CD4-positive, alpha-beta T cell (primary cell): ENCODE measurements at regions of chr3 and their contacts with region 1.

Region 1: DNA sequence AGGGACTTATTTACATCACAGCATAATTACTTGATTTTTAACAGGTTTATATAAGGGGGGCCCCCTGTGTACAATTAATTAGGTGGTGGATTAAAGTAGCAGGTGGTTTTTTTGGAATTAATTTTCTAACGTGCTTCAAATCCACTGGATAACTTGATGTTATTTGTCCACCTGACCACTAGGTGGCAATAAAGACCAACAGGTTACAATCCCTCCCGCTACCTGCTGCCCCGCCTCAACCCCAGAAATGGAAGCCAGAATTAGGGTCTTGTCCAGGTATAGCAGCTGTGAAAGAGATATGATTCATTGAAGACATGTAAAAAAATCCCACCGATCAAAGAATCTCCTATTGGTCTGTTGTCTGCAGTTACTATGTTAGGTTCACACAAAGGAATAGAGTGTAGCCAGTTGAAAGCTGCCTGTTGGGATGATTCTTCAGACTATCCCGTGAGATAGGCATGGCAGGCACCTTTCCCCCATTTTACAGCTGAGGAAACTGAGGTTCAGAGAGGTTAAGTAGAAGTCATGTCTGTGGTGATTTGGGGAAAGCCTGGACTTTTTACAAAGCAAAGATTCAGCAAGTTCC is 44.0 kb downstream of the MFSD1 start:
- DNase-seq: peak in 8 of 14 experiments; percentile 5 to 64 (median 28)
- ATAC-seq: no peak
- H3K4me3 ChIP-seq: no peak overlapping the region
- H3K4me3 Mint-ChIP-seq: no peak overlapping the region
- H3K27ac ChIP-seq: no peak overlapping the region
- H3K27ac Mint-ChIP-seq: no peak overlapping the region
- H3K4me1 ChIP-seq: peaks cover 3% of the 10 kb centered on the region
- H3K4me1 Mint-ChIP-seq: peaks cover 3% of the 10 kb centered on the region
- H3K27me3 ChIP-seq: no peaks in the 10 kb centered on the region
- H3K27me3 Mint-ChIP-seq: peaks cover 6% of the 10 kb centered on the region
- CTCF ChIP-seq: peak; percentile 93

Region 2: DNA sequence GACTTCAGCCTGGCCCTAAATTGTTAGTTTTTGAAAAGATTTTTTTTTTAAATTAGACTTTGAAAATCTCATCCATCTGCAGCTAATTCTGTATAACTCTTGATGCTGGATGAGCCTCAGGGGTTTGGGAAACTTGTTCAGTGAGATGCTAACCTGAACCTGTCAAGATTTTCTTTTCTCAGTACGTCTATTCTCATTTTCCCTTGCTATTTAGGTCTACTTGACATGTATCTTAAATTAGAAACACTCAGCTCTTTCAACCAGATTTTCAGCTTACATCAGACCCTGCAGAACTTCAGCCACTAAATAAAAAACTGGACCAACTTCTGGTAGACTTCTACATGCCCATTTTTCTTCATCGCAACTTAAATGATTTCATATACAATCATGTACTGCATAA is 17.4 kb after region 1 on chr3:
- CTCF ChIA-PET with region 1: no interaction called
- POLR2A ChIA-PET with region 1: no interaction called
- intact Hi-C with region 1: no loop called
- DNase-seq: no peak
- ATAC-seq: no peak
- H3K4me3 ChIP-seq: no peak overlapping the region
- H3K4me3 Mint-ChIP-seq: no peak overlapping the region
- H3K27ac ChIP-seq: no peak overlapping the region
- H3K27ac Mint-ChIP-seq: no peak overlapping the region
- H3K4me1 ChIP-seq: no peaks in the 10 kb centered on the region
- H3K4me1 Mint-ChIP-seq: no peaks in the 10 kb centered on the region
- H3K27me3 ChIP-seq: no peaks in the 10 kb centered on the region
- H3K27me3 Mint-ChIP-seq: peaks cover 7% of the 10 kb centered on the region
- CTCF ChIP-seq: no peak

Region 3: DNA sequence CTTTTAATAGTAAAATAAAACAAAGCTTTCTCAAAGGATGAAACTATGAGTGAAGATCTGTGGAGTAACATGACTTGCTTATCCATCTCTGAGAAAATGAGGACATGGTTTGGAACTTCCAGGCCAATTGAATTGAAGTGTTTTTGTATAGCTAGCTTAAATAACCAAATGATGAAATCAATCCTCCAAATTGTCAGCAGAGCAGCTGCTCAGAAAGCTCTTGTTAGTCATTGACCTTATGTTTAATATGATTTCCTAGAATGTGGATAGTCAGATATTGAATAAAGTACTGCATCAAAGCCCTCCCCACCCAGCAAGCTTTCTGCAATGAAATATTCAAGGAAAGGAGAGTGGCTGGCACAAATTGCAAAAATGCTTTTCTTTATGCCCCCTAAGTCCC is 393.2 kb after region 1 on chr3:
- CTCF ChIA-PET with region 1: no interaction called
- POLR2A ChIA-PET with region 1: no interaction called
- intact Hi-C with region 1: no loop called
- DNase-seq: no peak
- ATAC-seq: no peak
- H3K4me3 ChIP-seq: no peak overlapping the region
- H3K4me3 Mint-ChIP-seq: no peak overlapping the region
- H3K27ac ChIP-seq: no peak overlapping the region
- H3K27ac Mint-ChIP-seq: no peak overlapping the region
- H3K4me1 ChIP-seq: no peaks in the 10 kb centered on the region
- H3K4me1 Mint-ChIP-seq: no peaks in the 10 kb centered on the region
- H3K27me3 ChIP-seq: no peaks in the 10 kb centered on the region
- H3K27me3 Mint-ChIP-seq: peaks cover 3% of the 10 kb centered on the region
- CTCF ChIP-seq: no peak

Region 4: DNA sequence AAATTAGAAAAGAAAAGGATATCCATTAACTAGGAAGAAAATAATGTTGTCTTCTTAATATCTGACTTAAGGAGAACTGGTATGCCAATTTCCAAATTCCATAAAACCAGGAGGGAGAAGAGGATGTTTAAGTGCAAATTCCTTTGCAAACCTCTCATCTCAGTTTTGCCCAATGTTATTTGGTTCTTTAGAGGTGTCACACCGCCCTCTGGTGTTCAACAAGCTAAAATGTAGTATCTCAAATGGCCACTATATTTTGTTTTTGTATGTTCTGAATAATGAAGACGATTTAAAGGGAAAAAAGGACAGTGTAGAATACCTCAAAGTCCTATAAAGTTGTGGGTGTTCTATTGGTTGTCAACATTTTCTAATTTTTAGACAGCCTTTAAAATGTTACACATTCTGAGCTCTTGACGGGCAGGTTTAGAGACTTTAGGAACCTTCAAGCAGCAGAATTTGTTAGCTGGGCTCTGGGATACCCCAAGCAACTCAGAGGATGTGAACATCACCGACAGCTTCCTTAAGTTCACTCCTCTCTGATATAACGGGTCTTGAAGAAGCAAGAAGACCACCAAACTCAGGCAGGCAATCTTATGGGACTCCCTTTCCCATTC is 414.3 kb after region 1 on chr3:
- CTCF ChIA-PET with region 1: interaction called, 10 read pairs
- POLR2A ChIA-PET with region 1: no interaction called
- intact Hi-C with region 1: loop called in 1 of 2 experiments (anchors 1 kb)
- DNase-seq: peak in 8 of 14 experiments; percentile 2 to 57 (median 22)
- ATAC-seq: no peak
- H3K4me3 ChIP-seq: no peak overlapping the region
- H3K4me3 Mint-ChIP-seq: no peak overlapping the region
- H3K27ac ChIP-seq: no peak overlapping the region
- H3K27ac Mint-ChIP-seq: no peak overlapping the region
- H3K4me1 ChIP-seq: no peaks in the 10 kb centered on the region
- H3K4me1 Mint-ChIP-seq: no peaks in the 10 kb centered on the region
- H3K27me3 ChIP-seq: no peaks in the 10 kb centered on the region
- H3K27me3 Mint-ChIP-seq: peaks cover 20% of the 10 kb centered on the region
- CTCF ChIP-seq: peak; percentile 74

Region 5: DNA sequence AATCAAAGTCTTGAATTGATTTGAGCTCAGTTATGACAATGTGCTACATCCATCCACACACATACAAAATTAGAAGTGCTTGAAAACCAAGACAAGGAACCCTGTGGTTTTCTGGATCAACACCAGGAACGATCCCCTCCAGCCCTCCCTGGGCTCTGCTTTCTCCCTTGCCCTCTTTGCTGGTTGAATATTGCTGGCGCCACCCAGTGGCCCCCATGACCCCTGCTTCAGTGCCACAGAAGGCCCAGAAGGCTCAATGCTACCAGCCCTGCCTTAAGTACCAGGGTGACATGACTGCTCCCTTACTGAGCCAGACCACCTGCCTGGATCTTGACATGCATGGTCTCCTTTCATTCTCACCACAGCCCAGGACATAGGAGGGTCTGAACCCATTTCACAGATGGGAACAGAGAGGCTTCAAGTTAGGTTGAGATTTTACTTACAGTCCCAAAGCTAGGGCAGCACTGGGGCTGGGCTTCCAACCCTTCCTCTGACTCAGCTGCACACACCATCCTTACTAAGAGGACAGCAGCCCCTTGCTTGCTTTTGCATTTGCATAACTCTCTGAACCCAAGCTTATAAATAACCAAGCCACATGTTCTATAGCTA is 1157.8 kb after region 1 on chr3:
- CTCF ChIA-PET with region 1: no interaction called
- POLR2A ChIA-PET with region 1: no interaction called
- intact Hi-C with region 1: loop called in 1 of 2 experiments (anchors 10 kb)
- DNase-seq: peak in 6 of 14 experiments; percentile 7 to 55 (median 26)
- ATAC-seq: no peak
- H3K4me3 ChIP-seq: no peak overlapping the region
- H3K4me3 Mint-ChIP-seq: no peak overlapping the region
- H3K27ac ChIP-seq: no peak overlapping the region
- H3K27ac Mint-ChIP-seq: no peak overlapping the region
- H3K4me1 ChIP-seq: no peaks in the 10 kb centered on the region
- H3K4me1 Mint-ChIP-seq: no peaks in the 10 kb centered on the region
- H3K27me3 ChIP-seq: no peaks in the 10 kb centered on the region
- H3K27me3 Mint-ChIP-seq: no peaks in the 10 kb centered on the region
- CTCF ChIP-seq: no peak